GM13976 (cell line): ENCODE measurements at regions of chr14 and their contacts with region 1.

Region 1: GRCh38 chr14:65269732-65270131 is 142.8 kb upstream of the FUT8 start:
- DNase-seq: no peak
- CTCF ChIP-seq: no peak

Region 2: DNA sequence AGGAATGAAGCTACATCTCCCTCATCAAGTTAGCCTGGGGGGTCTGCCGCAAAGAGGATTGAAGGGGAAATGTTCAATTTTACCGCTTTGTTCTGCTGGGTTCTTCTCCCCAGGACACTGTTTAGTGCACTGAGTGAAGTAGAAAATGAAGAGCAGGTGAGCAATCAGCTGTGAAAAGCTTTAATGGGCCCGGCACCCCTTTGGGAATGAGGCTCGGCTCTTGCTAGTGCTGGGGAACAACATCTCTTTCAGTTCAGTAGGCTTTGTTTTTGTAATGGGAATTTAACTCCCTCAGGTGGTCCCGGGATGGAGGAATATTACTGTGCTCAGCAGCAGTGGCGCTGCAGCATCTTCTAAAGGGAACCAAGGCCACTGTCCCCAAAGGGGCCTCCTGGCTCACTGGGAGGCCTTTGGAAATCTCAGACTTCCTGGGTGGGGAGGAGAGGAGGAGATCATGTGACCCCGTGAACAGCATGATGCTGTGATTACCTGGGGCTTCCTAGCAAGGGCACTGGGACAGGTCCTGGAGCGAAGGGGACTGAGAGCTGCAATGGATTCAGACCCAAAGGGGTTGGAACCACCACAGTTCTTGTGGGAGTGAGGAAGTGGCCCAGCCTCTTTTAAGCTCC is 82.2 kb before region 1 on chr14:
- in situ Hi-C with region 1: no loop called
- DNase-seq: no peak
- CTCF ChIP-seq: no peak

Region 3: DNA sequence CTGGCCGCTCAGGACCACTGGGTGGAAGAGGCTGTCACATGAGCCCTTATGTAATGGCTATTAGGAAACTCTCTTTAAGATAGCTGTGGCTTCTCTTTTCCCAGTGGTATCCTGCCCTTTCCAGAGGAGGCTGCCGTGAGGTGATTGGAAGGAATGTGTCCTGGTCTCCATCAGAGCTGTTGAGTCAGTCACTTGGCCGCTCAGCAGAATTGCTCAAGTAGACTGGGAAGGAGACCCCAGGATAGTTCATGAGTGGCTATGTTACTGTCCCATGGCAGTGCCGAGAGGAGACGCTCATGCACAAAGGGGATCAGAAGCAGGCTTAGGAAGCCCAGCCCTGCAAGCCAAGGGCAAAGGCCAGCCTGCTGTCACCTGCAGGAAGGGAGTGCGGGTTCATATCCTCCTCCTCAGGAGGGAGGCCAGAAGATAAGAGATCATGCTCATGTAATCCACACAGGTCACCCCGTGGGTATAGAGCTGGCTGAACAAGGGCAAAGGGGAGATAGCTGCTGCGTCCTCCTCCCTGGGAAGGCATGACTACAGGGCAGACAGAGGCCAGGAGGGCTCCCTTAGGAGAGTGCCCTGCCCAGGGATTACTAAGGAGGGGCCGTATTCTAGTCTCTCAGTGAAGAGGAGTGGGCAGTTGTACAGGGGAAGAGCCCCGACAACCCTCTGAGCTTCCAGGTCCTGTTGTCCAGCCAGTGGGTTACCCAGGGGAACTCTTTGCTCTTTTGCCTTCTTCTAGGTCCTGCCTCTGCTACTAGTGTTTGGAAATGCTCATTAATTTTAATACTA is 30.4 kb before region 1 on chr14:
- in situ Hi-C with region 1: loop called (anchors 5 kb)
- DNase-seq: no peak
- CTCF ChIP-seq: no peak